A549 (cell line): ENCODE measurements at regions of chr12 and their contacts with region 1.

Region 1: GRCh38 chr12:117212563-117213190 is 22.4 kb upstream of the FBXO21 start:
- DNase-seq: peak; percentile 79 to 87
- ATAC-seq: peak; percentile 86 to 96
- H3K4me3 ChIP-seq: no peak overlapping the region
- H3K27ac ChIP-seq: peak overlapping the region in 1 of 2 experiments; percentile 5; a peak in 1 of 6 replicates
- H3K4me1 ChIP-seq: 0 out of 3 replicates have a peak, but pooled peaks cover 5% of the 10 kb centered on the region
- CTCF ChIP-seq: peak; percentile 96
- EP300 ChIP-seq: no peak
- POLR2A ChIP-seq: no peak
- RAD21 ChIP-seq: peak; percentile 92 to 98

Region 2: GRCh38 chr12:117202556-117202955 is 10.1 kb before region 1 on chr12:
- CTCF ChIA-PET with region 1: interaction called, 83 read pairs
- POLR2A ChIA-PET with region 1: no interaction called
- DNase-seq: no peak
- ATAC-seq: no peak
- H3K4me3 ChIP-seq: no peak overlapping the region
- H3K27ac ChIP-seq: no peak overlapping the region
- H3K4me1 ChIP-seq: no peaks in the 10 kb centered on the region
- CTCF ChIP-seq: no peak
- EP300 ChIP-seq: no peak
- POLR2A ChIP-seq: no peak
- RAD21 ChIP-seq: no peak

Region 3: GRCh38 chr12:117228239-117228638 is 15.6 kb after region 1 on chr12:
- CTCF ChIA-PET with region 1: interaction called, 39 read pairs
- POLR2A ChIA-PET with region 1: no interaction called
- DNase-seq: peak; percentile 61 to 72
- ATAC-seq: peak; percentile 82 to 86
- H3K4me3 ChIP-seq: no peak overlapping the region
- H3K27ac ChIP-seq: no peak overlapping the region
- H3K4me1 ChIP-seq: peaks cover 10% of the 10 kb centered on the region; the same call in 2 of the 3 replicates
- CTCF ChIP-seq: no peak
- EP300 ChIP-seq: no peak
- POLR2A ChIP-seq: no peak
- RAD21 ChIP-seq: no peak

Region 4: GRCh38 chr12:117236456-117237001 is 23.9 kb after region 1 on chr12:
- CTCF ChIA-PET with region 1: interaction called, 39 read pairs
- POLR2A ChIA-PET with region 1: no interaction called
- DNase-seq: peak; percentile 69 to 82
- ATAC-seq: peak; percentile 91 to 95
- H3K4me3 ChIP-seq: no peak overlapping the region
- H3K27ac ChIP-seq: no peak overlapping the region
- H3K4me1 ChIP-seq: no peaks in the 10 kb centered on the region
- CTCF ChIP-seq: peak; percentile 88
- EP300 ChIP-seq: no peak
- POLR2A ChIP-seq: no peak
- RAD21 ChIP-seq: peak; percentile 88 to 89

Region 5: GRCh38 chr12:117316336-117316735 is 103.7 kb after region 1 on chr12:
- CTCF ChIA-PET with region 1: interaction called, 10 read pairs
- POLR2A ChIA-PET with region 1: no interaction called
- DNase-seq: no peak
- ATAC-seq: no peak
- H3K4me3 ChIP-seq: no peak overlapping the region
- H3K27ac ChIP-seq: no peak overlapping the region
- H3K4me1 ChIP-seq: no peaks in the 10 kb centered on the region
- CTCF ChIP-seq: no peak
- EP300 ChIP-seq: no peak
- POLR2A ChIP-seq: no peak
- RAD21 ChIP-seq: no peak

Region 6: DNA sequence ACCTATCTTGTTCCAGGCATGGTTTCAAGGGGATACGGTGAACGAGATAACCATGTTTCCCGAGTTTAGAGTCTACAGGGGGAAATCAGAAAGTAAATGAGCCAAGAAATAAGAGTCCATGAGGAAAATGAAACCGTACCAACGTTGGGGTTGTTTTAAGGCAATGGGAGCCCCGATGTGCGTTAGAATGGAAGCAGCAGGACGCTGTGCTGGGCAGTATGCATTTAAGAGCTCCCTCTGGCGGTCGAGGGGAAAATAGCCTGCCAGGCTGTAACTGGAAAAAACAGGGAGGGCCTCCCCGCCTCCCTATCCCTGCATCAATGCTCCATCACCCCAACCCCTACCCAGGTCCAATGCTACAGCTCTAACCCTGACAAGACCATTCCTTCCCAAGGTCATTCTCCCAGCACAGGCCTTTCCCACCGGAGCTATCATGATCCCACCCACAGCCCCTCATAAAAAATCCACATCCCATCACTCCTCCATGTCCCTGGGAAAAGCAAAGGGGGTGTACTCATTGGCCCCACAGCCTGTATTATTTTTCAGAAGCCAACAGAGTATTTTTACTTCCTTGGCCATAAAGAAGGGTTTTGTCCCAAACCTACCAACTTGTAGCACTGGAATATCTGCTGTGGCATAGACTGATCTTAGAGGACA is 375.1 kb after region 1 on chr12:
- CTCF ChIA-PET with region 1: interaction called, 16 read pairs
- POLR2A ChIA-PET with region 1: no interaction called
- DNase-seq: peak; percentile 60 to 77
- ATAC-seq: peak; percentile 75 to 98; a peak in 5 of 6 replicates
- H3K4me3 ChIP-seq: no peak overlapping the region
- H3K27ac ChIP-seq: peak overlapping the region; percentile 44 to 65; a peak in 5 of 6 replicates
- H3K4me1 ChIP-seq: no peaks in the 10 kb centered on the region
- CTCF ChIP-seq: peak; percentile 89
- EP300 ChIP-seq: no peak
- POLR2A ChIP-seq: no peak
- RAD21 ChIP-seq: peak; percentile 92 to 94

Region 7: DNA sequence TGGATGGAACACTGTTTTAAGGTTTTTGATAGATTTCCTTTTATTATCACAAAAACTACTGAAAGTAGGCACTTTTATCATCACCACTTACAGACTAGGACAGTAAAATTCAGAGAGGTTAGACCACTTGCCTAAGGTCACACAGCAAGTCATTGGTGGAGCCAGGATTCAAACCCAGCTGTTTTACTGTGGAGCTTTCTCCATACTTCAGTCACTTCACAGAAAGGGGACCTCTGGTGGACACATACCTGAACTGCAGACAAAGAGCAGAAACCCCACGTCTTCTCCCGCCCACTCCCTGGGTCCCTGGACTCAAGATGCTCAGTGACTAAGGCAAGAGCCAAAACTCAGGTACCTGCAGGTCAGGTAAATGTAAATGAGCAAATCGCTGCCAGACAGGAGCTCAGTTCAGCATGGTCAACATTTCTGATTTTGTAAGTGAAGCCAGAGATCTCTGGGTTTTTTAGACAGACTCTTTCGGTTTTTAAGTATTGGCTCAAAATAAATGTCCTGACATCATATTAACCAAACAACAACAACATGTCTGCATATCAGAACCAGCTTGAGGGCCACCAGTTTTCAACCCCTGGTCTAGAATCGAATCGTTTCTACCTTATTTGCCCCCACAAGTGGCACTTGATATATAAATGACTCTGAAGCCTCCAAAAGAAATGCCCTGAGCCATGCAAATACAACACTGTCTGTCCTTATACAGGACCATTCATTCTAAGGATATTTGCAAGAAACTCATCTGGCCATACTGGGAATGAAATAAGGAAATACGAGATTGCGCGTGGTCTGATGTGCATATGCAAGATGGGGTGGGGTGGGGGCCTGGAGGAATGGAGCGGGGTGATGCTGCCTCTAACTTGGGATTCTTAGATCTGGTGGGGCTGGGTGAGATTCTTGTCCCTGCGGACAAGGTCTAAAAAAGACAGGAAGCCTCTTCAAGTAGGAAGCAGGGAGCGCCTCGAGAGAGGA is 645.2 kb after region 1 on chr12:
- CTCF ChIA-PET with region 1: interaction called, 287 read pairs
- POLR2A ChIA-PET with region 1: no interaction called
- DNase-seq: peak; percentile 70 to 79
- ATAC-seq: peak; percentile 49 to 64; a peak in 4 of 6 replicates
- H3K4me3 ChIP-seq: no peak overlapping the region
- H3K27ac ChIP-seq: peak overlapping the region; percentile 34 to 44; a peak in 4 of 6 replicates
- H3K4me1 ChIP-seq: peaks cover 29% of the 10 kb centered on the region
- CTCF ChIP-seq: peak; percentile 54
- EP300 ChIP-seq: no peak
- POLR2A ChIP-seq: no peak
- RAD21 ChIP-seq: peak in 1 of 2 experiments; percentile 27; a peak in 1 of 5 replicates